OCI-LY7 (cell line): ENCODE measurements at regions of chr11 and their contacts with region 1.

Region 1: GRCh38 chr11:19432370-19433061 is 191.8 kb upstream of the E2F8 start:
- DNase-seq: peak; percentile 77
- H3K4me3 ChIP-seq: peak overlapping the region; percentile 63
- H3K27ac ChIP-seq: peak overlapping the region; percentile 95
- H3K4me1 ChIP-seq: peaks cover 93% of the 10 kb centered on the region
- CTCF ChIP-seq: no peak

Region 2: GRCh38 chr11:19240420-19241259 is 191.9 kb before region 1 on chr11 and contains the start of gene E2F8:
- CTCF ChIA-PET with region 1: no interaction called
- POLR2A ChIA-PET with region 1: interaction called, 5 read pairs
- intact Hi-C with region 1: loop called (anchors 5 kb)
- DNase-seq: peak; percentile 97
- H3K4me3 ChIP-seq: peak within 1 kb of the TSS; percentile 97
- H3K27ac ChIP-seq: peak within 1 kb of the TSS; percentile 90
- H3K4me1 ChIP-seq: peaks cover 35% of the 10 kb centered on the region
- CTCF ChIP-seq: no peak
- total RNA-seq, gene E2F8: 29.3 and 46.0 TPM in 2 replicates

Region 3: DNA sequence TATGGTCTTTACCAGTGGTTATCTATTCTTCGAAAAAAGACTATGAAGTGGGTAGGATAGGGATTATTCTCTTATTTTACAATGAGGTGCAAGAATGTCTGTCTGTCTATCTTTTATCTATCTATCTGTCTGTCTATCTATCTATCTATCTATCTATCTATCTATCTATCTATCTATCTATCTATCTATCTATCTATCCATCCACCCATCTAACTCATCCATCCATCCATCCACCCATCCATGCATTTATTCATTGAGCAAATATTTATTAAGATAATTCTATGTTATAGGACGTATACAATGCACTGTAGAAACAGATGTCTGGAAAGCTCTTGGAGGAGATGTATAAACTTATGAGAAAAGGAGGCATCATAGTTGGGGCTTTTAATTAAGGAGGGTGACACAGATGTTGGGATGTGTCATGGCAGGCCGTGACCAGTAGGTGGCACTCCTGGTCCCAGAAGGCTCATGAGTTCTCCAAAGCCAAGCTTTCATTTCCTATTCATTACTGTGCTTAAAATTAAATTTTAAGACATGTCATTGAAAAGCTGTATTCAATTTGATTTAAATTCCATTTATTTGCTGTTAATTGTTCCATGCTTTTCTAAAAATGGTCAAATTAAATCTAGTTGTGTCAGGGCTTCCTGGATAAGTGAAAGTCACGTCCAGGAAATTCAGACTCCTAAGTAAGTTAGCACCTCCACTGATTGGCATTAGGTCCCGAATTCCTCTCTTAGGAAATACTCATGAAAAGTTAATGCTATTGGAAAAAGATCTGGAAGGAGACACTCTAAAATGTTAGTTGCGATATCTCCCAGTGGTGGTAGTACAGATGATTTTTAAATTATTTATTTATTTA is 172.8 kb before region 1 on chr11:
- CTCF ChIA-PET with region 1: no interaction called
- POLR2A ChIA-PET with region 1: no interaction called
- intact Hi-C with region 1: loop called (anchors 5 kb)
- DNase-seq: peak; percentile 70
- H3K4me3 ChIP-seq: no peak overlapping the region
- H3K27ac ChIP-seq: no peak overlapping the region
- H3K4me1 ChIP-seq: no peaks in the 10 kb centered on the region
- CTCF ChIP-seq: peak; percentile 97

Region 4: GRCh38 chr11:19276859-19277808 is 155.4 kb before region 1 on chr11:
- CTCF ChIA-PET with region 1: no interaction called
- POLR2A ChIA-PET with region 1: no interaction called
- intact Hi-C with region 1: no loop called
- DNase-seq: no peak
- H3K4me3 ChIP-seq: no peak overlapping the region
- H3K27ac ChIP-seq: no peak overlapping the region
- H3K4me1 ChIP-seq: no peaks in the 10 kb centered on the region
- CTCF ChIP-seq: no peak

Region 5: DNA sequence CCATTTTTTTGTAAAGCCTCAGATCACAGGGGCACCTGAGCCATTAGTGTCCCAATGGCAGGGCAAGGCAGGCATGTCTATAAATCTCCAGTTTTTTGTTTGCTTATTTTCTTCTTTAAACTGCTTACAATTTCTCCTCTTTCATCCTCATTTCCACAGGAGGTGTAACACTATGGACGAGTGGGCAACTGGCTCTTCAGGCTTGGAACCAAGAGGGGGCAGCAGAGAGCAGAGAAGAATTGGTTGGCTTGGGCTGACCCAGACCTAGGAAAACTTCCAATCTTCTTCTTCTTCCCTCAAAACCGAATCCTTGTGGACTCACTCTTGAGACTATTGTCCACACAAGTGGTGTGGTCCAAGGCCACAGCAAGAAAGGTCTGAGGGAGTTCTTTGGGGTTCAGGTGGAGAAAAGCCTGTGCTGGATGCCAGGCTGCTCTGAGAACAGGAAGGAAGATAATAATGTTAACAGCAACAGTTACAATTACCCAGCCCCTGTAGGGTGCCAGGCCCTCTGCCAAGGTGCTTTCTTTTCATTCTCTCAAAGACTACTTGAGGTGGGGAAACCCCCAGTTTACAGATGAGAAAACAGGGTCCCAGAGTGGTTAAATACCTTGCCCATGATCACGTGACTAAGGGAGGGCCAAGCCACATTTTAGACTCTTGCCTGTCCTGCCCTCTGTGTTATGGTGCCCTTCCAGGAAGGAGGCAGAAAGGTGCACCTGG is 121.0 kb before region 1 on chr11:
- CTCF ChIA-PET with region 1: no interaction called
- POLR2A ChIA-PET with region 1: no interaction called
- intact Hi-C with region 1: no loop called
- DNase-seq: peak; percentile 58
- H3K4me3 ChIP-seq: no peak overlapping the region
- H3K27ac ChIP-seq: no peak overlapping the region
- H3K4me1 ChIP-seq: no peaks in the 10 kb centered on the region
- CTCF ChIP-seq: peak; percentile 96

Region 6: DNA sequence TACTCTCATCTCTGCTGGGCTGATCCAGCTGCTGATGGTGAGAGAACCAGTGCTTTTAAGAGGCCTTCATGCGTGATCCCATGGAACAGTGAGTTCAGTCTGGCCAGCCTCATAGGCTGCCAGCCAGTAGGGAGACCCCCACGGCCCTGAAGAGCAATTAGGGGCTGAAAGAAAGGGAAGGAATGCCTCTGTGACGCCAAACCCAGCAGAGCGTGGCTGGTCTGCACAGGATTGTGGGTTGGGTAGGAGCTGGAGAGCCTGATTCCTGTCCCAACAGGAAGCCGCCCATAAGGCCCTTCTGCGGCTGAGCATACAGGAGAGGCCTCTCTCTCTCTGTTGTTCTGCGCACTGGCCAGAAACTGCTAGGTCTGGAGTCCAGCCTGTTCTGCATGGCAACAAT is 10.2 kb before region 1 on chr11:
- CTCF ChIA-PET with region 1: no interaction called
- POLR2A ChIA-PET with region 1: interaction called, 12 read pairs
- intact Hi-C with region 1: no loop called
- DNase-seq: no peak
- H3K4me3 ChIP-seq: no peak overlapping the region
- H3K27ac ChIP-seq: no peak overlapping the region
- H3K4me1 ChIP-seq: peaks cover 27% of the 10 kb centered on the region
- CTCF ChIP-seq: no peak

Region 7: DNA sequence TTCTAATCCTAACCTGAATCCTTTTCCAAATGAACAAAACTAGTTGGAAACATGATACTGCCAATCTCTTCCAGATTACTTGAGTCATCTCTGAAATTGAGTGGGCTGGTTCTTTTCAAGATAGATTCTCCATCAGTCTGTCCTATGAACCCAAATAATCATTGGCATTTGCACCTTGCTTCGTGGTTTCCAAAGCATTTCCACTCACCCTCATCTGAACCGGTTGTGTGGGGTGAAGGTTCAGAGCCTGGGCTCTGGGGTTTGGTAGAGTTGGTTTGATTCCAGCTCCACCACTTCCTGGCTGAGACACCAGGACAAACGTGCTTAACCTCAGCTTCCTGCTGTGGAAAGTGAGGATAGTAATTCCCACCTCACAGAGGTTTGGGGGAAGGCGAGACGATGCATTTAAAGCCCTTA is 14.6 kb after region 1 on chr11:
- CTCF ChIA-PET with region 1: no interaction called
- POLR2A ChIA-PET with region 1: interaction called, 11 read pairs
- intact Hi-C with region 1: no loop called
- DNase-seq: no peak
- H3K4me3 ChIP-seq: no peak overlapping the region
- H3K27ac ChIP-seq: no peak overlapping the region
- H3K4me1 ChIP-seq: peaks cover 33% of the 10 kb centered on the region
- CTCF ChIP-seq: no peak